Activated naive CD8-positive, alpha-beta T cell treated with anti-CD3 and anti-CD28 coated beads, Interleukin-2, amount 10 ng/mL, durations not matched to agents 7 days and 5 days (primary cell): ENCODE measurements at regions of chr11 and their contacts with region 1.

Region 1: DNA sequence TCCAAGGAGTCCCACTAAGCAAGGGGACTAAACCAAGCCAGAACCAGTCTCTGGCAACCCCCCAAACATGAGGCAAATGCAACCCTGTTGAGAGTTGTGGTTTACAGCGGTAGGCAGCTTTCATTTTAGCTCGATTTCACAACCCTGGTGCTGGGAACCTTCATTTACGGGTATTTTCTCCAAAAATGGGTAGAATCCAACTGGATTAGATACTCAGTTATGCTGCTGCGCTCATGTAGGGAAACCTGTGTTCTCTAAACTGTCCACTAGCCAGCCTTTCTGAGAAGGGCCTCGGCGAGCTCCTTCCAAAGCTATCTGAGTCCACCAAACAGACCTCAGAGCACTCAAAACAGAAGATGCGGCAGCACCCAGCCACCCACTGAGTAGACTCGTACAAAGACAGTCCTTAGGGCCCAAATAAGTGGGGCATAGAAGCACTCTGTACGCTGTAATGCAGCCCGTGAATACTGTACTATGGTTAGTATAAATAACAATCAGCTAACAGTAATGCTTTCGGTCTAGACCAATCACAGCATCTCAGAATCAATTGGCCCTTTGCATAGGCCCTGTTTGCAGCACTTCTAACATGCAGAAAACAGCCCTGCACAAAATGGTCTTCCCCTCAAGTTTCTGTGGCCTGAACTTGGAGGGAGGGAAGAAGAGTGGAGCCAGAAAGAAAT is 104.7 kb downstream of the ETS1 start:
- DNase-seq: no peak
- ATAC-seq: peak; percentile 61
- H3K4me3 Mint-ChIP-seq: peak overlapping the region; percentile 86
- H3K27ac Mint-ChIP-seq: peak overlapping the region; percentile 97
- H3K4me1 Mint-ChIP-seq: peaks cover 88% of the 10 kb centered on the region
- H3K27me3 Mint-ChIP-seq: no peaks in the 10 kb centered on the region

Region 2: GRCh38 chr11:128472128-128473089 is 10.2 kb before region 1 on chr11:
- POLR2A ChIA-PET with region 1: interaction called, 241 read pairs
- DNase-seq: no peak
- ATAC-seq: peak; percentile 49
- H3K4me3 Mint-ChIP-seq: peak overlapping the region; percentile 74
- H3K27ac Mint-ChIP-seq: peak overlapping the region; percentile 97
- H3K4me1 Mint-ChIP-seq: peaks cover 88% of the 10 kb centered on the region
- H3K27me3 Mint-ChIP-seq: no peaks in the 10 kb centered on the region

Region 3: DNA sequence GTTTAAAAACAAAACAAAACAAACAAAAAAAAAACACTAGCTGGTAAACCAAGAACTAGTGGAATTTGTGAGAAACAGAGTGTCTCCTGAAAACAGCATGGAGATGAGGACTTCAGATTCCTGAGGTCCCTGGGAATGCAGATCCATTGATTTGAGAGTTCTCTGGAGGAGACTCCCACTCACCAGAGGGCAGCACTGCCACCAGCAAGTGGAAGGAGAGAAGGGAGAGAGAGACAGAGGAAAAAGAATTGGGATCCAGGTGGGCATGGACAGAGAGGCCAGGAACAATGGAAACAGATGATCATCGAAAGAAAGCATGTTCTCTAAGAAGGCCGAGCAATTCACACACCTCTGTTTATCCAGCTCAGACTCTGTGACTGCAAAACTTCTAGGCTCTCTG is 73.0 kb after region 1 on chr11:
- POLR2A ChIA-PET with region 1: no interaction called
- DNase-seq: no peak
- ATAC-seq: no peak
- H3K4me3 Mint-ChIP-seq: no peak overlapping the region
- H3K27ac Mint-ChIP-seq: no peak overlapping the region
- H3K4me1 Mint-ChIP-seq: peaks cover 39% of the 10 kb centered on the region
- H3K27me3 Mint-ChIP-seq: no peaks in the 10 kb centered on the region